Colonic mucosa (tissue), 4 donors: ENCODE measurements at regions of chr12 and their contacts with region 1.

Region 1: GRCh38 chr12:46675736-46676135 is 150.1 kb downstream of the SLC38A4 start:
- DNase-seq: no peak
- H3K4me3 ChIP-seq: no peak overlapping the region
- H3K27ac ChIP-seq: no peak overlapping the region
- H3K4me1 ChIP-seq: no peaks in the 10 kb centered on the region
- H3K27me3 ChIP-seq: no peaks in the 10 kb centered on the region
- CTCF ChIP-seq: peak; percentile 63

Region 2: GRCh38 chr12:46124848-46125619 is 550.7 kb before region 1 on chr12:
- intact Hi-C with region 1: loop called (anchors 10 kb)
- DNase-seq: peak; percentile 67
- H3K4me3 ChIP-seq: no peak overlapping the region
- H3K27ac ChIP-seq: no peak overlapping the region
- H3K4me1 ChIP-seq: peaks cover 9% of the 10 kb centered on the region
- H3K27me3 ChIP-seq: no peaks in the 10 kb centered on the region
- CTCF ChIP-seq: peak; percentile 51

Region 3: GRCh38 chr12:46585854-46586621 is 89.7 kb before region 1 on chr12:
- intact Hi-C with region 1: no loop called
- DNase-seq: peak; percentile 74
- H3K4me3 ChIP-seq: no peak overlapping the region
- H3K27ac ChIP-seq: no peak overlapping the region
- H3K4me1 ChIP-seq: no peaks in the 10 kb centered on the region
- H3K27me3 ChIP-seq: no peaks in the 10 kb centered on the region
- CTCF ChIP-seq: no peak

Region 4: DNA sequence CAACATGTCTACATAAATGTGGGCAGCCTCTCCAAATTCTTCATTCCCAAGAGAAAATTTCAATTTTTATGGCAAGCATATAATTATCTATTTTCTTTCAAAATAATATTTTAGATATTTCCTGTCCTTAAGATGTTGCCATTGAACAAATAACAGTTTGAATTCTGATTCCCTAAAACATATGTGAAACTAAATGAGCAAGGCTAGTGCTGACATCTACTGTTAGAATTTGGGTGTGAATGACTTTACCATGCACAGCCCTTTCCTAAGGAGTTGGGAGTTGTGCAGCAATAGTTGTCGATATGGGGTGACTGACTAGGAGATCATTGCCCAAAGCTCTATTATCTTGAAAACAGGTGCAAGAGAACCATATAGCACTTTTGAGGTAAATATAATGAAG is 258.2 kb after region 1 on chr12:
- intact Hi-C with region 1: loop called (anchors 2 kb)
- DNase-seq: no peak
- H3K4me3 ChIP-seq: no peak overlapping the region
- H3K27ac ChIP-seq: no peak overlapping the region
- H3K4me1 ChIP-seq: no peaks in the 10 kb centered on the region
- H3K27me3 ChIP-seq: no peaks in the 10 kb centered on the region
- CTCF ChIP-seq: peak; percentile 34

Region 5: GRCh38 chr12:47021298-47021697 is 345.6 kb after region 1 on chr12:
- intact Hi-C with region 1: loop called (anchors 10 kb)
- DNase-seq: no peak
- H3K4me3 ChIP-seq: no peak overlapping the region
- H3K27ac ChIP-seq: no peak overlapping the region
- H3K4me1 ChIP-seq: no peaks in the 10 kb centered on the region
- H3K27me3 ChIP-seq: no peaks in the 10 kb centered on the region
- CTCF ChIP-seq: peak; percentile 47